Common myeloid progenitor, CD34-positive (primary cell): ENCODE measurements at regions of chr2 and their contacts with region 1.

Region 1: GRCh38 chr2:197145471-197146138 is 165.0 kb downstream of the ANKRD44 start:
- DNase-seq: peak; percentile 81 to 97 (median 95)
- H3K4me3 ChIP-seq: peak overlapping the region in 1 of 7 experiments; percentile 30
- H3K27ac ChIP-seq: peak overlapping the region in 1 of 2 experiments; percentile 47
- H3K4me1 ChIP-seq: peaks cover 14 to 41% (median 30%) of the 10 kb centered on the region in 4 experiments
- H3K27me3 ChIP-seq: no peaks in the 10 kb centered on the region

Region 2: DNA sequence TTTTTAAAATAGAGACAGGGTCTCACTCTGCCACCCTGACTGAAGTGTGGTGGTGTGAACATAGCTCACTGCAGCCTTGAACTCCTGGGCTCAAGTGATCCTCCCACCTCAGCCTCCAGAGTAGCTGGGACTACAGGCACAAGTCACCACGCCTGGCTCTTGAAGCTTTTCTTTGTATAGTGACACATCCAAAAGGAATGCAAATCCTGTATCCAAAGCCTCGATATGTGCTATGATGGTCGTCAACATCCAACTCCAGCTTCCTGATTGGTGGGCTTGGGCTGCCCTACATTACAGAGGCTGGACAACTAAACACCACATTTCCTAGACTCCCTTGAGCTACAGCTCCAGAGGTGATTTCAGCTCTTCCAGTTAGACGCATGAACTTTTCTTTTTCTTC is 117.4 kb before region 1 on chr2:
- CTCF ChIA-PET with region 1: no interaction called
- POLR2A ChIA-PET with region 1: no interaction called
- DNase-seq: no peak
- H3K4me3 ChIP-seq: no peak overlapping the region
- H3K27ac ChIP-seq: no peak overlapping the region
- H3K4me1 ChIP-seq: no peaks in the 10 kb centered on the region
- H3K27me3 ChIP-seq: no peaks in the 10 kb centered on the region

Region 3: GRCh38 chr2:197130318-197130717 is 15.3 kb before region 1 on chr2:
- CTCF ChIA-PET with region 1: interaction called, 12 read pairs
- POLR2A ChIA-PET with region 1: no interaction called
- DNase-seq: peak; percentile 11 to 52 (median 47)
- H3K4me3 ChIP-seq: no peak overlapping the region
- H3K27ac ChIP-seq: peak overlapping the region in 1 of 2 experiments; percentile 38
- H3K4me1 ChIP-seq: peaks cover 0 to 14% (median 3%) of the 10 kb centered on the region in 4 experiments
- H3K27me3 ChIP-seq: no peaks in the 10 kb centered on the region

Region 4: GRCh38 chr2:197159661-197160211 is 14.1 kb after region 1 on chr2:
- CTCF ChIA-PET with region 1: interaction called, 14 read pairs
- POLR2A ChIA-PET with region 1: no interaction called
- DNase-seq: peak in 1 of 3 donors; percentile 15
- H3K4me3 ChIP-seq: no peak overlapping the region
- H3K27ac ChIP-seq: no peak overlapping the region
- H3K4me1 ChIP-seq: peaks cover 0 to 8% (median 7%) of the 10 kb centered on the region in 4 experiments
- H3K27me3 ChIP-seq: no peaks in the 10 kb centered on the region

Region 5: GRCh38 chr2:197306696-197307040 is 161.1 kb after region 1 on chr2:
- CTCF ChIA-PET with region 1: no interaction called
- POLR2A ChIA-PET with region 1: no interaction called
- DNase-seq: peak in 2 of 3 donors; percentile 53 to 67
- H3K4me3 ChIP-seq: peak overlapping the region in 3 of 7 experiments; percentile 2 to 41 (median 35)
- H3K27ac ChIP-seq: peak overlapping the region in 1 of 2 experiments; percentile 59
- H3K4me1 ChIP-seq: peaks cover 42 to 74% (median 63%) of the 10 kb centered on the region in 4 experiments
- H3K27me3 ChIP-seq: no peaks in the 10 kb centered on the region